A549 (cell line): ENCODE measurements at regions of chr3 and their contacts with region 1.

Region 1: GRCh38 chr3:52001443-52001974 is 5.8 kb upstream of the RPL29 start:
- DNase-seq: peak; percentile 64 to 85
- ATAC-seq: peak; percentile 78 to 95
- H3K4me3 ChIP-seq: no peak overlapping the region
- H3K27ac ChIP-seq: no peak overlapping the region
- H3K4me1 ChIP-seq: peaks cover 9% of the 10 kb centered on the region; the same call in 1 of the 3 replicates
- CTCF ChIP-seq: peak; percentile 83
- EP300 ChIP-seq: no peak
- POLR2A ChIP-seq: no peak
- RAD21 ChIP-seq: peak; percentile 92 to 94

Region 2: GRCh38 chr3:52014613-52015012 is 13.1 kb after region 1 on chr3:
- CTCF ChIA-PET with region 1: interaction called, 96 read pairs
- POLR2A ChIA-PET with region 1: no interaction called
- DNase-seq: no peak
- ATAC-seq: peak; percentile 30 to 78; a peak in 4 of 6 replicates
- H3K4me3 ChIP-seq: no peak overlapping the region
- H3K27ac ChIP-seq: no peak overlapping the region
- H3K4me1 ChIP-seq: no peaks in the 10 kb centered on the region
- CTCF ChIP-seq: no peak
- EP300 ChIP-seq: no peak
- POLR2A ChIP-seq: no peak
- RAD21 ChIP-seq: peak in 1 of 2 experiments; percentile 20; a peak in 1 of 5 replicates

Region 3: GRCh38 chr3:52056968-52057805 is 55.7 kb after region 1 on chr3:
- CTCF ChIA-PET with region 1: interaction called, 36 read pairs
- POLR2A ChIA-PET with region 1: interaction called, 4 read pairs
- DNase-seq: peak; percentile 92 to 96
- ATAC-seq: peak; percentile 74 to 90
- H3K4me3 ChIP-seq: peak overlapping the region; percentile 55
- H3K27ac ChIP-seq: peak overlapping the region; percentile 72 to 93
- H3K4me1 ChIP-seq: peaks cover 23% of the 10 kb centered on the region
- CTCF ChIP-seq: no peak
- EP300 ChIP-seq: no peak
- POLR2A ChIP-seq: no peak
- RAD21 ChIP-seq: no peak

Region 4: GRCh38 chr3:52130966-52131622 is 129.6 kb after region 1 on chr3:
- CTCF ChIA-PET with region 1: interaction called, 22 read pairs
- POLR2A ChIA-PET with region 1: no interaction called
- DNase-seq: no peak
- ATAC-seq: no peak
- H3K4me3 ChIP-seq: no peak overlapping the region
- H3K27ac ChIP-seq: no peak overlapping the region
- H3K4me1 ChIP-seq: peaks cover 16% of the 10 kb centered on the region
- CTCF ChIP-seq: no peak
- EP300 ChIP-seq: no peak
- POLR2A ChIP-seq: no peak
- RAD21 ChIP-seq: no peak

Region 5: GRCh38 chr3:52144034-52144795 is 142.7 kb after region 1 on chr3:
- CTCF ChIA-PET with region 1: interaction called, 218 read pairs
- POLR2A ChIA-PET with region 1: no interaction called
- DNase-seq: peak; percentile 69 to 84
- ATAC-seq: peak; percentile 92 to 96
- H3K4me3 ChIP-seq: no peak overlapping the region
- H3K27ac ChIP-seq: no peak overlapping the region
- H3K4me1 ChIP-seq: no peaks in the 10 kb centered on the region
- CTCF ChIP-seq: peak; percentile 71
- EP300 ChIP-seq: no peak
- POLR2A ChIP-seq: no peak
- RAD21 ChIP-seq: peak; percentile 79 to 80